ENCODE measurements at regions of chr15 and their contacts with region 1.

Region 1: DNA sequence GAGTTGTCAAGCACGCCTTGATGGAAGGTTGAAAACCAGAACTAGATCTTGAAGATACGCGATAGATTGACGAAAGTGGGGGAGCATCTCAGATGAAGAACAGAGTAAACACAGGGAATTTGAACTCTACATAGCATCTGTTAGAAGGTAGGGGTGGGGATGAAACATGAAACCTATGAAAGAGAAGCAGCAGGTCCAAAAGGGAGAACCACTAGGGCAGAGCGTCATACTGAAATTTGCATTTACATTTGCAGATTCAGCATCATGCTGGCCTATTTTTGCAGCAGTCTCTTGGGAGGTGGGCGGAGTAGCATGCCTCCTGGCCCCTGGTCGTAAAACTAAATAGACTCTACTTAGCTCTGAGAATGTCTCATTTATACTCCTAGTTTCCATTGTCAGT is 46.1 kb upstream of the RASGRP1 start:
- DNase-seq: peak; percentile 78
- ATAC-seq: peak; percentile 52
- H3K4me3 Mint-ChIP-seq: peak overlapping the region; percentile 42
- H3K27ac Mint-ChIP-seq: peak overlapping the region; percentile 96
- H3K4me1 Mint-ChIP-seq: peaks cover 81% of the 10 kb centered on the region
- H3K27me3 Mint-ChIP-seq: no peaks in the 10 kb centered on the region

Region 2: DNA sequence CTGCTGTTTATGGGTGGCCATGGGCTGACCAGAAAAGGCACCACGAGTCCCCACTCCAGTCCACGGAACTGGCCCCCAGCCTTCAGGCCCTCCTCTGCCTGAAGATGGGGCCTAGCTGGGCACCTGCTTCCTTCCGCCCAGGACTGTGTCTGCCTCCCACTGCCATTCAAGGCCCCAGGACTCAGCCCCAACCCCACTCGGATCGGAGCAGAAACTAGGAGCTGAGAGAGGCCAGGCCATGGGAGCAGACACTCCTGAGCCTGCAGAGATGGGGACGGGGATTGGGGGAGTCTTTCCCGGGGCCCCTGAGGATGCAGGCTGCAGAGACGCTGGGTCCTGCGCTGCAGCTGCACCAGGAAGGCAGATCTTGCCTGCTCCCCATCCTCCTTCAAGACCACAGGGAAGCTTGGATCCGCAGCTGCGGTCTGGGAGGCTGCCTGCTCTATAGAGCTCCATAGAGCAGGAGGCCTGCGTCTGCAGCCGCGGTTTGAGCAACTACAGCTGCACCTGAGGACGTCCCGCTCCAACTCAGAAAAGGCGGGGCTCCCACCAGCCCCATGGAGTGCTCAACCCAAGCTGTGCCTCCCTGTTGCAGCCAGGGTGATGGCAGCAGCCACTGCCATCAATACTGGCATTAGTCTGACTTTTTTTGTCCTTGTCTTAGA is 1060.3 kb before region 1 on chr15:
- CTCF ChIA-PET with region 1: no interaction called
- POLR2A ChIA-PET with region 1: no interaction called
- intact Hi-C with region 1: no loop called
- DNase-seq: no peak
- ATAC-seq: no peak
- H3K4me3 Mint-ChIP-seq: no peak overlapping the region
- H3K27ac Mint-ChIP-seq: no peak overlapping the region
- H3K4me1 Mint-ChIP-seq: no peaks in the 10 kb centered on the region
- H3K27me3 Mint-ChIP-seq: no peaks in the 10 kb centered on the region

Region 3: GRCh38 chr15:38490242-38490922 is 120.4 kb before region 1 on chr15:
- CTCF ChIA-PET with region 1: no interaction called
- POLR2A ChIA-PET with region 1: no interaction called
- intact Hi-C with region 1: loop called in 1 of 2 experiments (anchors 2 kb)
- DNase-seq: no peak
- ATAC-seq: no peak
- H3K4me3 Mint-ChIP-seq: no peak overlapping the region
- H3K27ac Mint-ChIP-seq: peak overlapping the region; percentile 71
- H3K4me1 Mint-ChIP-seq: peaks cover 54% of the 10 kb centered on the region
- H3K27me3 Mint-ChIP-seq: no peaks in the 10 kb centered on the region

Region 4: GRCh38 chr15:38589502-38589901 is 21.2 kb before region 1 on chr15:
- CTCF ChIA-PET with region 1: interaction called, 3 read pairs
- POLR2A ChIA-PET with region 1: interaction called, 8 read pairs
- intact Hi-C with region 1: loop called in 1 of 2 experiments (anchors 1 kb)
- DNase-seq: peak; percentile 57
- ATAC-seq: peak; percentile 92
- H3K4me3 Mint-ChIP-seq: no peak overlapping the region
- H3K27ac Mint-ChIP-seq: peak overlapping the region; percentile 72
- H3K4me1 Mint-ChIP-seq: peaks cover 37% of the 10 kb centered on the region
- H3K27me3 Mint-ChIP-seq: no peaks in the 10 kb centered on the region

Region 5: DNA sequence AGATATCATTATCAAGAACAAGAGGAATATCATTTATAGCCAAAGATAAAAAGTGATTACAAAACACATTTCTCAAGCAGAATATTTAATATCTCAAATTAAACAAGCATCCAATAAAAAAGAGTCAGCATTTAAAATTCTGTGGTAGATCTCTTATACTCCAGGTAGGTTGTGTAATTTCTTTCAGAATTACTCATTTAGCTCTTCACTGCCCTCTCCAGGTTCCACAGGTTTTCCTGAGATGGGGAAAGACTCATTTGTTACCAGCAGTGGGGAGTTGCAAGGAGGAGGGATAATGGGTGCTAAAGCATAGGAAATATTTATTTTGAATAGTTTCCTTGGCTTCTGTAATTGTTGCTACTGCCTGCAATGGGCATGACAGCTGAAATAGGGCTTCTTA is 36.9 kb after region 1 on chr15:
- CTCF ChIA-PET with region 1: interaction called, 13 read pairs
- POLR2A ChIA-PET with region 1: interaction called, 6 read pairs
- intact Hi-C with region 1: loop called (anchors 2 kb)
- DNase-seq: no peak
- ATAC-seq: no peak
- H3K4me3 Mint-ChIP-seq: no peak overlapping the region
- H3K27ac Mint-ChIP-seq: peak overlapping the region; percentile 34
- H3K4me1 Mint-ChIP-seq: peaks cover 75% of the 10 kb centered on the region
- H3K27me3 Mint-ChIP-seq: no peaks in the 10 kb centered on the region

Region 6: GRCh38 chr15:38660738-38661137 is 50.0 kb after region 1 on chr15:
- CTCF ChIA-PET with region 1: interaction called, 4 read pairs
- POLR2A ChIA-PET with region 1: interaction called, 6 read pairs
- intact Hi-C with region 1: loop called (anchors 2 kb)
- DNase-seq: peak; percentile 60
- ATAC-seq: peak; percentile 77
- H3K4me3 Mint-ChIP-seq: peak overlapping the region; percentile 66
- H3K27ac Mint-ChIP-seq: peak overlapping the region; percentile 97
- H3K4me1 Mint-ChIP-seq: peaks cover 81% of the 10 kb centered on the region
- H3K27me3 Mint-ChIP-seq: no peaks in the 10 kb centered on the region

Region 7: DNA sequence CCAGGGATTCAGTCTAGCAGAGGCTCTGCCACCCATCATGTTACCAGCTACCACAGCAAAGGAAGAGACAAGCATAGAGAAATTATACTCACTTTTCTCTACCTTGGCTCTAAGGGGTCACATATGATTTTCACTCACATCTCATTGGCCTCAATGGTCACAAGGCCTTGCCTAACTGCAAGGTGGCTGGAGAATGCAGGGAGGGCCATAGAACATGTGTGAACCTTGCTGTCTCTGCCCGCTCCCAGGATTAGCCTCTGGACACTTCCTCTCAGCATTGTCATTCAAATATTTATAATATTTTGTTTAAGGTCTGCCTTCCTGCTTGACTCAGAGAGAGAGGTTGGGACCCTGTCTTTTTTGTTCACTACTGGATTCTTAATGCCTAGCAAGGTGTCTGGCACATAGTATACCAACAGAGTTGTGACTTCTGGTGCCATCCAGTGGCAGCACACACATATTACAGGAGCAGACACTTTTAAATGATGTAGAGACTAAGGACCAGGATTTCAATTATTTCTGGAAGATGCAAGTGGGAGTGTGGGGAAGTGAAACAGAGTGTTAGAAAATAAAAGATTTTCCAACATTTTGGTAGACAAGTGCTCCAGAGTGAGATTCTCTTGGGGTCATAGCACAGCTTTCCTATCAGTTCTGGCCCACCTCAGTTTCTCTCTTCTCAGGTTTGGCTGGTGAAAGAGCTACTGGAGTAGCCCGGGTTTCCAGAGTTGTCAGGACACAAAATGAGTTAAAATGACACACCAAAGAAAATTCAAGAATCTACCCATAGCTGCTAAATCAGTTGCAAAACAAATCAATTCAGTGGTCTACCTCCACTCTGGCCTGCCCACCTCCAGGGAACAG is 72.9 kb after region 1 on chr15:
- CTCF ChIA-PET with region 1: interaction called, 100 read pairs
- POLR2A ChIA-PET with region 1: interaction called, 48 read pairs
- intact Hi-C with region 1: loop called in 1 of 2 experiments (anchors 1 kb)
- DNase-seq: peak; percentile 86
- ATAC-seq: peak; percentile 73
- H3K4me3 Mint-ChIP-seq: no peak overlapping the region
- H3K27ac Mint-ChIP-seq: peak overlapping the region; percentile 80
- H3K4me1 Mint-ChIP-seq: peaks cover 79% of the 10 kb centered on the region
- H3K27me3 Mint-ChIP-seq: no peaks in the 10 kb centered on the region

Region 8: GRCh38 chr15:38768970-38769369 is 158.2 kb after region 1 on chr15:
- CTCF ChIA-PET with region 1: no interaction called
- POLR2A ChIA-PET with region 1: no interaction called
- intact Hi-C with region 1: no loop called
- DNase-seq: no peak
- ATAC-seq: no peak
- H3K4me3 Mint-ChIP-seq: no peak overlapping the region
- H3K27ac Mint-ChIP-seq: no peak overlapping the region
- H3K4me1 Mint-ChIP-seq: no peaks in the 10 kb centered on the region
- H3K27me3 Mint-ChIP-seq: no peaks in the 10 kb centered on the region

Measured in activated CD4-positive, alpha-beta T cell treated with anti-CD3 and anti-CD28 coated beads for 36 hours (primary cell).